HepG2 (cell line): ENCODE measurements at regions of chrX and their contacts with region 1.

Region 1: GRCh38 chrX:115650916-115651315 is 89.9 kb downstream of the PLS3 start:
- DNase-seq: peak; percentile 33
- ATAC-seq: peak; percentile 70
- H3K4me3 ChIP-seq: no peak overlapping the region
- H3K27ac ChIP-seq: no peak overlapping the region
- H3K4me1 ChIP-seq: no peaks in the 10 kb centered on the region
- H3K27me3 ChIP-seq: no peaks in the 10 kb centered on the region
- CTCF ChIP-seq: peak; percentile 66
- EP300 ChIP-seq: no peak
- POLR2A ChIP-seq: no peak
- RAD21 ChIP-seq: no peak

Region 2: GRCh38 chrX:114985967-114986592 is 664.8 kb before region 1 on chrX:
- CTCF ChIA-PET with region 1: no interaction called
- POLR2A ChIA-PET with region 1: no interaction called
- in situ Hi-C with region 1: no loop called
- intact Hi-C with region 1: no loop called
- DNase-seq: no peak
- ATAC-seq: no peak
- H3K4me3 ChIP-seq: no peak overlapping the region
- H3K27ac ChIP-seq: no peak overlapping the region
- H3K4me1 ChIP-seq: no peaks in the 10 kb centered on the region
- H3K27me3 ChIP-seq: no peaks in the 10 kb centered on the region
- CTCF ChIP-seq: no peak
- EP300 ChIP-seq: no peak
- POLR2A ChIP-seq: no peak
- RAD21 ChIP-seq: no peak

Region 3: DNA sequence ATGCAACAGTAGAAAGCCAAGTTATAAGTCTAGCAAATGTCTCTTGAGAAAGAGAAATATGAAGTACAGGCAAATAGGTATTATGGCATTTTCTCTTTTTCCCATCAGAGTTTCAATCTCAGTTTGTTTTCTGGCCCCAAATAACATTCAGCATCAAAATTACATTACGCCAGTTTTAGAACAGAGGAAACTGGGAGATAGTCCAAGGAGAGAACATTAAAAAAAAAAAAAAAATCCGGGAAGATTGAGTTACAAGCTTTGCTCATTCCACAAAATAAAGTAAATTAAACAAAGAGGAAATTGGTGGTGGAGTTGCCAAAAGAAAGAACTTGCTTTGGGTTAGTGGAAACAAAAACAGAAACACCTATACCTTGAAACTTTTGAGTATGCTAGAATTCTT is 583.1 kb before region 1 on chrX:
- CTCF ChIA-PET with region 1: no interaction called
- POLR2A ChIA-PET with region 1: no interaction called
- in situ Hi-C with region 1: no loop called
- intact Hi-C with region 1: loop called (anchors 5 kb)
- DNase-seq: no peak
- ATAC-seq: no peak
- H3K4me3 ChIP-seq: no peak overlapping the region
- H3K27ac ChIP-seq: no peak overlapping the region
- H3K4me1 ChIP-seq: no peaks in the 10 kb centered on the region
- H3K27me3 ChIP-seq: no peaks in the 10 kb centered on the region
- CTCF ChIP-seq: no peak
- EP300 ChIP-seq: no peak
- POLR2A ChIP-seq: no peak
- RAD21 ChIP-seq: no peak